Heart right ventricle (tissue), 16 donors: ENCODE measurements at regions of chr10 and their contacts with region 1.

Region 1: GRCh38 chr10:26556748-26557640 is 118.9 kb downstream of the APBB1IP start:
- DNase-seq: no peak
- ATAC-seq: peak in 6 of 8 donors; percentile 50 to 75 (median 71)
- H3K4me3 ChIP-seq: no peak overlapping the region
- H3K27ac ChIP-seq: peak overlapping the region in 1 of 10 donors; percentile 74
- H3K4me1 ChIP-seq: peaks cover 0 to 28% (median 0%) of the 10 kb centered on the region in 9 donors
- H3K27me3 ChIP-seq: peaks cover 0 to 43% (median 5%) of the 10 kb centered on the region in 7 donors
- CTCF ChIP-seq: peak; percentile 52 to 87 (median 78)

Region 2: GRCh38 chr10:25725918-25726716 is 830.9 kb before region 1 on chr10:
- intact Hi-C with region 1: loop called in 1 of 10 experiments (anchors 10 kb)
- DNase-seq: peak in 1 of 2 donors; percentile 18
- ATAC-seq: no peak
- H3K4me3 ChIP-seq: no peak overlapping the region
- H3K27ac ChIP-seq: no peak overlapping the region
- H3K4me1 ChIP-seq: no peaks in the 10 kb centered on the region
- H3K27me3 ChIP-seq: peaks cover 0 to 15% (median 7%) of the 10 kb centered on the region in 7 donors
- CTCF ChIP-seq: peak; percentile 35 to 76 (median 66)

Region 3: DNA sequence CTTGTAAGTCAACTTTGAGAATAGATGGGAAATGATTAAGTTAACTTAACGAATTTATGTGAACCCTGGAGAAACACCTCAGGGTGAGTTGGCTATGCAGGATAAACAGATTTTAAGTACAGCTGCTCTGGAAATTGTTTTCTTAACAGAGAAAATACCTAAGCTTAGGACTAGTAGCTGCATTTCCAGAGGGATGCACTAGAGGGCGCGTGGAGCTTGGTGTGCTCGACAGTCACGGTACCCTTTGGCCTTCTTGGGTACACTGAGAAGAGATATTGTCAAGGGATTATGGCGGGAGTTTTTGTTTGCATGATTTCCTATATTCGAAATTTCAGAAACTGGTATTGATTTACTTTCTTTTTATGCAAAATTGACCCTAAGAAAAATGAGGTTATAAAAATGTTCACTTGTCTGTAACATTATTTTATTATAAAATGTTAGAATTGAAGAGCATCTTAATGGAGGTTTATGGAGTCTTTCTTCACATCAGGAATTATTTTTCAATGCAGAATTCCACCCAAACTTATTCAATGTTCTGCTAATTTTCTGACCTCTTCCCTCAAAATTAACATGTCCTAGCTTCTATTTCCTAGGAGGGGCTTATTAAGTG is 681.3 kb before region 1 on chr10:
- intact Hi-C with region 1: loop called in 8 of 10 experiments (anchors 5 to 10 kb)
- DNase-seq: peak; percentile 40 to 61
- ATAC-seq: peak in 1 of 8 donors; percentile 53
- H3K4me3 ChIP-seq: no peak overlapping the region
- H3K27ac ChIP-seq: no peak overlapping the region
- H3K4me1 ChIP-seq: no peaks in the 10 kb centered on the region
- H3K27me3 ChIP-seq: no peaks in the 10 kb centered on the region
- CTCF ChIP-seq: peak; percentile 66 to 89 (median 84)

Region 4: DNA sequence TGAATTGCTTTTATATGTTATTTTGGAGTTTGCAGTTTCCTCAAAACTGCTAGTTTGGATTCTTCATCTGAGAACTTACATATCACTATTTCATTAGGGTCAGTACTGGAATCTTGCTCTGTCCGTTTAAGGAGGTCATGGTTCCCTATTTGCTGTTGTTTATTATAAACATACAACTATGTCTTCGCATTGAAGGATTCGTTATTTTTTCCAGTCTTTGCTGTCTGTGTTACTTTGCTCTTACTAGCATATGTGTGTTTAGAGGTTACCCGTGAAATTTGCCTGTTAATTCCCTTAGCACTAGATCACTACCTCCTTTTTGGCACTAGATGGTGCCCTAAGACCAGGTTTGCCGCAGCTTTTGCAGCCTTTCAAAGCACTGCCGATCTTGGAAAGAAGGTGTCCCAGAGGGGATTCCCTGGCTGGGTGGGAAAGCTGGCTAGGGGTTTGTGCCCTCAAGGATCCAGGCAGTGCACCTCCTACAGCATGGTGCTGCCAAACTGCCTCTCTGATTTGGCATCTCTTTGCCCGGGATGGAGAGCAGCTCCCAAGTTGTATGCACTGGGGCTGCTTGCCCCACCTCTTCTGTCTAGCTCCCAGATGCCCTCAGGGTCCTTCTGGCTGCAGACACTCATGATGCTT is 221.9 kb before region 1 on chr10:
- intact Hi-C with region 1: loop called (anchors 1 to 5 kb)
- DNase-seq: peak in 1 of 2 donors; percentile 30
- ATAC-seq: peak in 6 of 8 donors; percentile 51 to 80 (median 63)
- H3K4me3 ChIP-seq: peak overlapping the region in 2 of 10 donors; percentile 13 to 45
- H3K27ac ChIP-seq: peak overlapping the region in 1 of 10 donors; percentile 52
- H3K4me1 ChIP-seq: peaks cover 0 to 4% (median 0%) of the 10 kb centered on the region in 9 donors
- H3K27me3 ChIP-seq: no peaks in the 10 kb centered on the region
- CTCF ChIP-seq: peak; percentile 31 to 75 (median 63)